Heart left ventricle (tissue), 16 donors: ENCODE measurements at regions of chr3 and their contacts with region 1.

Region 1: DNA sequence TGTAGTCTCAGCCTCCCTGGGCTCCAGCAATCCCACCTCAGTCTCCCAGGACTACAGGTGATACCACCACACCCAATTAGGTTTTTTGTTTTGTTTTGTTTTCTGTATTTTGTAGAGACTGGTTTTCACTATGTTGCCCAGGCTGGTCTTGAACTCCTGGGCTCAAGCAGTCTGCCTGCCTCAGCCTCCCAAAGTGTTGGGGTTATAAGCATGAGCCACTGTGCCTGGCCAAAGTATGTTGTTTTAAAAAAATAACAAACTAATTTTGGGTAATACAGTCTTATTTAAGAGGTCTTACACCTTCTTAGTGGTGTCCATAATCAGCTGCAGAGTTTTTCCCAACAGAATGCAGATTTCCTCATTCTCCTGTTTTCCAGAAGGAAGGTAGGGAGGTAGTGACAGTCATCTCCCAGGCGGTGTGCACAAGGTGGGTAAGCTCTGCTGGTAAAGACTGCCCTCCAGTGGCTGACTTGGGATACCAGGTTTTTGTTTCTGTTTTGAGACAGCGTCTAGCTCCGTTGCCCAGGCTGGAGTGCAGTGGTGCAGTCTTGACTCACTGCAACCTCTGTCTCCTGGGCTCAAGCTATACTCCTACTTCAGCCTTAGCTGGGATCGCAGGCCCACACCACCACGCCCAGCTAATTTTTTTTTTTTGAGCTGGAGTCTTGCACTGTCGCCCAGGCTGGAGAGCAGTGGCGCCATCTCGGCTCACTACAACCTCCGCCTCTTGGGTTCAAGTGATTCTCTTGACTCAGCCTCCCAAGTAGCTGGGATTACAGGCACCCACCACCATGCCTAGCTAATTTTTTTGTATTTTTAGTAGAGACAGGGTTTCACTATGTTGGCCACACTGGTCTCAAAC is 58.4 kb downstream of the MAP6D1 start:
- DNase-seq: peak in 4 of 5 donors; percentile 64 to 74 (median 71)
- ATAC-seq: peak; percentile 76 to 93 (median 90)
- H3K4me3 ChIP-seq: no peak overlapping the region
- H3K27ac ChIP-seq: no peak overlapping the region
- H3K4me1 ChIP-seq: peaks cover 0 to 21% (median 4%) of the 10 kb centered on the region in 12 donors
- H3K27me3 ChIP-seq: no peaks in the 10 kb centered on the region
- CTCF ChIP-seq: peak; percentile 76 to 89 (median 82)
- POLR2A ChIP-seq: no peak

Region 2: DNA sequence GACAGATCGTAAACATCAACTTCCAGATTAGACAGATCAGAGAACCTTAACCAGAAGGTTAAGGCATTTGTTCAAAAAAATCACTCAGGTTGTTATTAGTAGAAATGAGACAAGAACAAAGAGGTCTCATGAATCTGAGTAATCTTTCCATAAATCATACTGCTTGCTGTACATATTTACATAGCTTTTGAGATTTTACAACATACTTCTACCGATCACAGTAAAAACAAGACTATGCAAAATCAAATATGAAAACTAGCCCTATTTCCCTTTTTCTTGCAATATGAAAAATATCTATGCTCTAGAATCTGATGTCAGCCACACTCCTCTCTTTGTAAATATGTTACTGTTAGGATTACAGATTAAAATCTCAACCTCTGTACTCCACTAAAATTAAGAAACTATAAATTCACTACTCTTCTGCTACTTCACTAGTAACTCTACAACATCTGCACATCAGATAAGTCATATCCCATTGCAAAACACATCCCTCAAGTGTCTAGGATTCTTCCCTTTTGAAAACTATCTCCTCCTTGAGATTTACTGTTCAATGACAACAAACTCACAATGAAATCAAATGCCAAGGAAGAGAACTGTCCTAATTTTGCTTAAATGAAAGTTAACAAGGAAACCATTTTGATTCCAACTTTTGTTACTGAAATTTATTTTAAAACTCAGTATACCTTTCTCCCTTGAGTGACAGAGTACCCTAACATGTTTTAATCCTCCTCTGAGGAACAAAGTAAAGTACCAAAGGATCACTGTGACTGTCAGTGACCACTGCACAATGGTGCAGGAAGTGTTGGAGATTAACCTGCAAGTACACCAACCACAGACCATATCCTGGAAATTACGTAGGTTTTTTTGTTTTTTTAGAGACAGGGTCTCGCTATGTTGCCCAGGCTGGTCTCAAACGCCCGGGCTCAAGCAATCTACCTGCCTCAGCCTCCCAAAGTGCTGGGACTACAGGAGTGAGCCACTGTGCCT is 799.5 kb before region 1 on chr3:
- intact Hi-C with region 1: no loop called
- DNase-seq: no peak
- ATAC-seq: no peak
- H3K4me3 ChIP-seq: no peak overlapping the region
- H3K27ac ChIP-seq: peak overlapping the region in 1 of 12 donors; percentile 33
- H3K4me1 ChIP-seq: peaks cover 0 to 38% (median 5%) of the 10 kb centered on the region in 12 donors
- H3K27me3 ChIP-seq: no peaks in the 10 kb centered on the region
- CTCF ChIP-seq: no peak
- POLR2A ChIP-seq: no peak

Region 3: DNA sequence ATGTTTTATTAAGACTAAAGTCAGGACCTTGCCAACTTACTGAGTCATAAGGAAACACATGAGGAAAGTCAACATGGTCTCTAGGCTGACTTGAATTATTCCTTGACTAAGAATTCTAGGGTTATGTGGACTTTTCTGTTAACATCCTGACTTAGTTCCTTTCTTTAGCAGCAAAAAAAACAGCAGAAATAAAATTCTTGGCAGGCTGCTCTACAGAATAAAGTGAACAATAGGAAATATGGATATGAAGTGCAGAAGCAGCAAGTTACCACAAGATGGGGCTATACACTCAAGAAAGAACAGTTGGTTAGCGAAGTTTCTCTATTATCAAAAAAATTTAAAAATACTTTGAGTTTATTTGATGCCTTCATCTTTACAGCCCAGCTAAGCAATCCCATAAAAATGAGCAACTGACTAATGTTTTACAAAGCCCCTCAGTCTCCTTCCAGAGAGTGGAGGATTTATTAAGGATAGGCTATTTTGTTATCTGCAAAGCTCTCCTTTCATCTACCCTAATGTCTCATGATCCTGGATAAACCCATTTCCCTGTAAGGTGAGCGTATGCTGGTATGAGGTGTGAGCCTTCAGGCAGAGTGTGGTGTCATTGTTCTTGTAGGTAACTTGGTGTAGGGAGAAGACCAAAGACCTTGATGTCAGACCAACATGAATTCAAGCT is 644.6 kb before region 1 on chr3:
- intact Hi-C with region 1: loop called in 2 of 10 experiments (anchors 5 to 10 kb)
- DNase-seq: no peak
- ATAC-seq: peak in 3 of 4 donors; percentile 34 to 57 (median 49)
- H3K4me3 ChIP-seq: no peak overlapping the region
- H3K27ac ChIP-seq: no peak overlapping the region
- H3K4me1 ChIP-seq: peaks cover 0 to 3% (median 0%) of the 10 kb centered on the region in 12 donors
- H3K27me3 ChIP-seq: peaks cover 0 to 9% (median 0%) of the 10 kb centered on the region in 9 donors
- CTCF ChIP-seq: peak; percentile 69 to 91 (median 82)
- POLR2A ChIP-seq: no peak

Region 4: GRCh38 chr3:183188895-183189462 is 578.0 kb before region 1 on chr3:
- intact Hi-C with region 1: loop called in 2 of 10 experiments (anchors 10 kb)
- DNase-seq: peak in 2 of 5 donors; percentile 33
- ATAC-seq: peak in 3 of 4 donors; percentile 29 to 49 (median 49)
- H3K4me3 ChIP-seq: no peak overlapping the region
- H3K27ac ChIP-seq: no peak overlapping the region
- H3K4me1 ChIP-seq: peaks cover 0 to 19% (median 0%) of the 10 kb centered on the region in 12 donors
- H3K27me3 ChIP-seq: no peaks in the 10 kb centered on the region
- CTCF ChIP-seq: peak in 10 of 12 donors; percentile 18 to 52 (median 41)
- POLR2A ChIP-seq: no peak

Region 5: GRCh38 chr3:183460081-183461055 is 306.6 kb before region 1 on chr3:
- intact Hi-C with region 1: loop called in 2 of 10 experiments (anchors 5 to 10 kb)
- DNase-seq: no peak
- ATAC-seq: no peak
- H3K4me3 ChIP-seq: no peak overlapping the region
- H3K27ac ChIP-seq: no peak overlapping the region
- H3K4me1 ChIP-seq: no peaks in the 10 kb centered on the region
- H3K27me3 ChIP-seq: no peaks in the 10 kb centered on the region
- CTCF ChIP-seq: no peak
- POLR2A ChIP-seq: no peak

Region 6: GRCh38 chr3:183468424-183468823 is 298.6 kb before region 1 on chr3:
- intact Hi-C with region 1: loop called (anchors 1 to 10 kb)
- DNase-seq: no peak
- ATAC-seq: peak in 1 of 4 donors; percentile 27
- H3K4me3 ChIP-seq: no peak overlapping the region
- H3K27ac ChIP-seq: no peak overlapping the region
- H3K4me1 ChIP-seq: peaks cover 0 to 10% (median 0%) of the 10 kb centered on the region in 12 donors
- H3K27me3 ChIP-seq: no peaks in the 10 kb centered on the region
- CTCF ChIP-seq: no peak
- POLR2A ChIP-seq: no peak

Region 7: DNA sequence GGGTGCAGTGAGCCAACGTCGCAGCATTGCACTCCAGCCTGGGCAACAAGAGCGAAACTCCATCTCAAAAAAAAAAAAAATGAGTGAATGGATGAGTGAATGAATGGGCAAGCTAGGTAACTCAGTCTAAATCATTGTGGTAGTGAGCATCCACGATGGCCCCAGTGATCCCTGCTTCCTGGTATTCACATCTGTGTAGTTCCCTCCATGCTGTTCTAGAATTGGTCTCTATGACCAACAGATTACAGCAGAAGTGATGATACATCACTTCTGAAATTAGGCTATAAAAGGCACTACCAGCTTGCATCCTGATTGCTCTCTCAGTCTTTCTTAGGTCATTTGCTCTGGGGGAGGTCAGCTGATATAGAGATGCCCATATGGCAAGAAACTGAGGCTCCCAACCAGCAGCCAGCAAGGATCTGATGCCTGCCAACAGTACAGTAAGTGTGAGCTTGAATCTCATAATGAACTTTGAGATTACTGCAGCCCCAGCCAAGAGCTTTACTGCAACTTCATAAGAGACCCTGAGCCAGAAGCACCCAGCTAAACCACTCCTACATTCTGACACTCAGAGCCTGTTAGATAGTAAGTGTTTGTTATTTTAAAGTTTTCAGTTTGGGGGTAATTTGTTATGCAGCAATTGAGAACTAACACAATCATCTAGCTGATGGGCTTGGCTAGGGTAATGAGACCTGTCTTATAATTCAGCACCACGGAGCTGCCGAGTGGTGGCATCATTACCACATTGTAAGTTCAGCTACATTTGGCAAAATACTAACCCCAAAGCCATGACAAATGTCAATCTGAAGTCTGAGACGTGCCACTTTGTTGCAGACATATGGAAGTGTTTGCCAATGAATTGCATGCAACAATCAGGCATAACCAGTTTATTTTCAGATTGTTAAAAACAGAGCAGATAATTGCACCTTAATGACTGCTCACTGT is 264.5 kb before region 1 on chr3:
- intact Hi-C with region 1: loop called (anchors 1 to 10 kb)
- DNase-seq: peak in 1 of 5 donors; percentile 47
- ATAC-seq: peak; percentile 73 to 89 (median 81)
- H3K4me3 ChIP-seq: no peak overlapping the region
- H3K27ac ChIP-seq: no peak overlapping the region
- H3K4me1 ChIP-seq: peaks cover 0 to 4% (median 0%) of the 10 kb centered on the region in 12 donors
- H3K27me3 ChIP-seq: no peaks in the 10 kb centered on the region
- CTCF ChIP-seq: peak in 11 of 12 donors; percentile 12 to 63 (median 45)
- POLR2A ChIP-seq: no peak

Region 8: DNA sequence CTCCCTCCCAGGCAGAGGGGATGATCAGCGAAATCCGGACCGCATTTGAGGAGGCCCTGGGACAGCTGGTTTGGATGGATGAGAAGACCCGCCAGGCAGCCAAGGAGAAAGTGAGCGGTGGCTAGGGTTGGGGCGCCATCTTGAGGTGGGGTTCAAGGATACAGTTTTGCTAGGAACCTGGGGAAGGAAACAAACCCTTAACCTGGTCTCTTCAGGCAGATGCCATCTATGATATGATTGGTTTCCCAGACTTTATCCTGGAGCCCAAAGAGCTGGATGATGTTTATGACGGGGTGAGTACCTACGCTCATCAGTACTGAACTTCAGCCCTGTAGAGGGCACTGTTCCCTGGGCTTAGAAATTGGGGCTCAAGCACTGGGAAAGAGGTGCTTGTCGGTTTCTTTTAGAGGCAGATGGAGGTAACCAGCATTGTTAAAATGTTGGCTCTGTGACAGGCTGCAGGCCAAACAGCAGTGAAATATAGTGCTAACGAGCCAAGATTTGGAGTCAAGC is 522.5 kb after region 1 on chr3:
- intact Hi-C with region 1: no loop called
- DNase-seq: peak in 2 of 5 donors; percentile 40 to 44
- ATAC-seq: peak; percentile 14 to 54 (median 47)
- H3K4me3 ChIP-seq: no peak overlapping the region
- H3K27ac ChIP-seq: no peak overlapping the region
- H3K4me1 ChIP-seq: peaks cover 0 to 7% (median 0%) of the 10 kb centered on the region in 12 donors
- H3K27me3 ChIP-seq: peaks cover 0 to 10% (median 3%) of the 10 kb centered on the region in 9 donors
- CTCF ChIP-seq: peak in 11 of 12 donors; percentile 36 to 66 (median 53)
- POLR2A ChIP-seq: no peak